PC-9 (cell line): ENCODE measurements at regions of chr2 and their contacts with region 1.

Region 1: GRCh38 chr2:153197402-153198386 is 280.9 kb downstream of the RPRM start:
- DNase-seq: no peak
- H3K4me3 ChIP-seq: no peak overlapping the region
- H3K27ac ChIP-seq: no peak overlapping the region
- H3K4me1 ChIP-seq: no peaks in the 10 kb centered on the region
- H3K27me3 ChIP-seq: no peaks in the 10 kb centered on the region
- CTCF ChIP-seq: no peak

Region 2: GRCh38 chr2:153235516-153235915 is 37.8 kb after region 1 on chr2:
- CTCF ChIA-PET with region 1: no interaction called
- POLR2A ChIA-PET with region 1: no interaction called
- intact Hi-C with region 1: no loop called
- DNase-seq: no peak
- H3K4me3 ChIP-seq: no peak overlapping the region
- H3K27ac ChIP-seq: no peak overlapping the region
- H3K4me1 ChIP-seq: no peaks in the 10 kb centered on the region
- H3K27me3 ChIP-seq: no peaks in the 10 kb centered on the region
- CTCF ChIP-seq: no peak

Region 3: GRCh38 chr2:153268941-153269461 is 71.3 kb after region 1 on chr2:
- CTCF ChIA-PET with region 1: no interaction called
- POLR2A ChIA-PET with region 1: no interaction called
- intact Hi-C with region 1: loop called (anchors 2 kb)
- DNase-seq: no peak
- H3K4me3 ChIP-seq: no peak overlapping the region
- H3K27ac ChIP-seq: no peak overlapping the region
- H3K4me1 ChIP-seq: no peaks in the 10 kb centered on the region
- H3K27me3 ChIP-seq: no peaks in the 10 kb centered on the region
- CTCF ChIP-seq: no peak